HepG2 (cell line): ENCODE measurements at regions of chr17 and their contacts with region 1.

Region 1: GRCh38 chr17:46193626-46194392 is 580 bp upstream of the KANSL1 start:
- DNase-seq: peak; percentile 94
- ATAC-seq: peak; percentile 98
- H3K4me3 ChIP-seq: peak overlapping the region; percentile 84 to 98 (median 94)
- H3K27ac ChIP-seq: peak overlapping the region; percentile 96
- H3K4me1 ChIP-seq: peaks cover 46% of the 10 kb centered on the region
- H3K27me3 ChIP-seq: no peaks in the 10 kb centered on the region; a peak in 1 of 5 replicates
- CTCF ChIP-seq: peak; percentile 27
- EP300 ChIP-seq: peak in 1 of 2 experiments; percentile 25; a peak in 1 of 4 replicates
- POLR2A ChIP-seq: peak; percentile 93 to 95
- RAD21 ChIP-seq: no peak; the same call in none of the 2 replicates

Region 2: DNA sequence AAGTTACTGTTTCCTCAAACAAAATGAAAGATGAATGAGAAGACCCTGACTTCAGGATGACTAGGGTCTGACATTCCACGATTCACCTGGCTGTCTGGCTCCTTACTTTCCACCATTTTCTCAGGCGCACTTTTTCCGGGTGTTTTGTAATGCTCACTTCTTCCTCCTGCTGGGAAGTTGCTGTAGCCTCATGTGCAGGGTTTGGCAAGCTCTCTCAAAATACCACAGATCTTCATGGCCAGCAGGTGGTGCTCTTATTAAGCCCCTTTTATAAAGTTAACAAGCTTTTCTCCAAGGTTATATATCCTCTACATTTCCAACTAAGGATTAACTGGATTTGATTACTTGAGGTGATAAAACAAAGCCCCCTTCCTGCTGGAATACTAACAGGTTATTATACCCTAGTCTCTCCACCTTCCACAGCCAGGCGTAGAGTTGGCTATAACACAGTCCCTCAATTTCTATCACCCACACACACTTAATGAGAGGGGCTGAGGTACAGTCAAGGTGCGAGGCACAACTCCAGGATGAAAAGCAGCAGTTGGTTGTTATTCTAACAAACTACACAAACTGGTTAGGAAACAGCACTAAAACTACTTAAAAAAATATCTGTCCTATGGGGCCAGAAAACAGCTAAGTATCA is 149.4 kb before region 1 on chr17:
- CTCF ChIA-PET with region 1: interaction called, 6 read pairs
- POLR2A ChIA-PET with region 1: no interaction called
- in situ Hi-C with region 1: no loop called
- intact Hi-C with region 1: loop called (anchors 1 kb)
- DNase-seq: peak; percentile 83
- ATAC-seq: peak; percentile 83
- H3K4me3 ChIP-seq: no peak overlapping the region
- H3K27ac ChIP-seq: no peak overlapping the region
- H3K4me1 ChIP-seq: peaks cover 12% of the 10 kb centered on the region; the same call in 1 of the 2 replicates
- H3K27me3 ChIP-seq: no peaks in the 10 kb centered on the region
- CTCF ChIP-seq: peak; percentile 78
- EP300 ChIP-seq: no peak
- POLR2A ChIP-seq: no peak
- RAD21 ChIP-seq: peak; percentile 67; the same call in 1 of the 2 replicates

Region 3: GRCh38 chr17:46072998-46073397 is 120.8 kb before region 1 on chr17:
- CTCF ChIA-PET with region 1: no interaction called
- POLR2A ChIA-PET with region 1: no interaction called
- in situ Hi-C with region 1: no loop called
- intact Hi-C with region 1: loop called (anchors 10 kb)
- DNase-seq: peak; percentile 20
- ATAC-seq: no peak
- H3K4me3 ChIP-seq: no peak overlapping the region
- H3K27ac ChIP-seq: no peak overlapping the region
- H3K4me1 ChIP-seq: peaks cover 11% of the 10 kb centered on the region
- H3K27me3 ChIP-seq: no peaks in the 10 kb centered on the region
- CTCF ChIP-seq: no peak
- EP300 ChIP-seq: no peak
- POLR2A ChIP-seq: no peak
- RAD21 ChIP-seq: no peak

Region 4: GRCh38 chr17:46097497-46097896 is 96.3 kb before region 1 on chr17:
- CTCF ChIA-PET with region 1: no interaction called
- POLR2A ChIA-PET with region 1: no interaction called
- in situ Hi-C with region 1: no loop called
- intact Hi-C with region 1: loop called (anchors 5 kb)
- DNase-seq: no peak
- ATAC-seq: no peak
- H3K4me3 ChIP-seq: no peak overlapping the region
- H3K27ac ChIP-seq: no peak overlapping the region
- H3K4me1 ChIP-seq: peaks cover 30% of the 10 kb centered on the region
- H3K27me3 ChIP-seq: no peaks in the 10 kb centered on the region
- CTCF ChIP-seq: no peak
- EP300 ChIP-seq: no peak
- POLR2A ChIP-seq: no peak
- RAD21 ChIP-seq: no peak

Region 5: GRCh38 chr17:46144246-46144645 is 49.6 kb before region 1 on chr17:
- CTCF ChIA-PET with region 1: no interaction called
- POLR2A ChIA-PET with region 1: no interaction called
- in situ Hi-C with region 1: no loop called
- intact Hi-C with region 1: no loop called
- DNase-seq: no peak
- ATAC-seq: no peak
- H3K4me3 ChIP-seq: no peak overlapping the region
- H3K27ac ChIP-seq: no peak overlapping the region
- H3K4me1 ChIP-seq: peaks cover 62% of the 10 kb centered on the region
- H3K27me3 ChIP-seq: no peaks in the 10 kb centered on the region
- CTCF ChIP-seq: no peak
- EP300 ChIP-seq: no peak
- POLR2A ChIP-seq: no peak
- RAD21 ChIP-seq: no peak

Region 6: DNA sequence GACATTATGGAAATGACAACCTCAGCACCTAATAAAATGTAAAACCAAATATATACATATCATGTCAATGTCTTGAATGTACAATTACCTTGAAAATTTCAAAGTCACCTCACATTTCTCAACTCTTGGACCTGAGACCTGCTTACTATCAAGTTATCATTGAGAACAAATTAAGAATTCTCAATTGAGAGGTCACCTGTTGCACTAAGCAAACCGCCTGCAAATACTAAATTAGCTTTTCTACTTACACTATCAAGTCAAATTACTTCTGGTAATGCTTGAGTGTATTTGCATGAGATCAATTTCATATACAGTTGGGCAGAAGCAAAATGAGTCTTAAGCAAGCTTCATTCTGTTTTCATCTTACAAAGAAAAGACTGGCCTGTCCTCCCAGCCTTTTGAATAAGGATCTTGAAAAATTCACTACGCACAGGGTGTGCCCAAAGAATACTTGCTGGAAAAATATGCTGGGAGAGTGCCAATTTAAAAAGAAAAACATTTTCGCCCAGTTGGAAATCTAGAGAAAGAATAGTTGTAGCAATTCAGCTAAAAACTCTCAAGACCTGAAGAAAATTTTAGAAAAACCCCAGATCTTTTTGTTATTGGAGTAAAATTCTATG is 36.3 kb before region 1 on chr17:
- CTCF ChIA-PET with region 1: no interaction called
- POLR2A ChIA-PET with region 1: no interaction called
- in situ Hi-C with region 1: no loop called
- intact Hi-C with region 1: no loop called
- DNase-seq: no peak
- ATAC-seq: no peak
- H3K4me3 ChIP-seq: no peak overlapping the region
- H3K27ac ChIP-seq: no peak overlapping the region
- H3K4me1 ChIP-seq: peaks cover 62% of the 10 kb centered on the region
- H3K27me3 ChIP-seq: no peaks in the 10 kb centered on the region
- CTCF ChIP-seq: no peak
- EP300 ChIP-seq: no peak
- POLR2A ChIP-seq: no peak
- RAD21 ChIP-seq: no peak

Region 7: DNA sequence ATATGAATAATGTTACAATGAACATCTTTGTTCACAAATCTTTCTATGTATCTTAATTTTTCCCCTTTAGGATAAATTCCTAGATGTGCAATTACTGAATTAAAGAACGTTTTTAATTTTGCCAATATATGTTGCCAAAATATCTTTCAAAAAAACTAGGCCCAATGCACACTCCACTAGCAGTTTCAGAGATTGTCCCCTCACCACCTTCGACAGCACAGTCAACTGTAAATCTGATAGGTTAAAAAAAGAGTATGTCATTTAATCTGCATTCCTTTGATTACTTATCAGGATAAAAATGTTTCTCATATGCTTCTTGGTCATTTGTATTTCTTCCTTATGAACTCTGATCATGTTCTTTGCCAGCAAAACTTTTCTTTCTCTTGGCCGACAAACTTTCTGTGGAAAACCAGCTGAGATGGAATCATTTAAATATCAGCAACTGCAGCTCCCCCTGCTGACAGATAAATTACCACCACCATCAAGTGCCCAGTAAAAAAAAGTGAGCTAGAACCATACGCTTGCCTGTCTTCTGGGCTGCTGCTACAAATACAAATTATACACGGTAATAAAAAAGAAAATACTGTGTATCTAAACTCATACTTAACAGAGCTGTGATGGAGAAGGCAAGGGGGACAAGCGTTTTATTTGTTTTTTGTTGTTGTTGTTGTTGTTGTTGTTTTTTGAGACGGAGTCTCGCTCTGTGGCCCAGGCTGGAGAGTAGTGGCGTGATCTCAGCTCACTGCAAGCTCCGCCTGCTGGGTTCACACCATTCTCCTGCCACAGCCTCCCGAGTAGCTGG is 19.0 kb after region 1 on chr17:
- CTCF ChIA-PET with region 1: interaction called, 32 read pairs
- POLR2A ChIA-PET with region 1: interaction called, 3 read pairs
- in situ Hi-C with region 1: no loop called
- intact Hi-C with region 1: loop called (anchors 1 kb)
- DNase-seq: peak; percentile 76
- ATAC-seq: peak; percentile 79
- H3K4me3 ChIP-seq: no peak overlapping the region
- H3K27ac ChIP-seq: no peak overlapping the region
- H3K4me1 ChIP-seq: no peaks in the 10 kb centered on the region
- H3K27me3 ChIP-seq: no peaks in the 10 kb centered on the region
- CTCF ChIP-seq: peak; percentile 80
- EP300 ChIP-seq: no peak
- POLR2A ChIP-seq: no peak
- RAD21 ChIP-seq: peak; percentile 72